Panc1 (cell line): ENCODE measurements at regions of chr17 and their contacts with region 1.

Region 1: GRCh38 chr17:58219001-58219788 is at the start of gene MKS1:
- DNase-seq: peak; percentile 48
- ATAC-seq: peak; percentile 100
- H3K4me3 ChIP-seq: peak within 1 kb of the TSS; percentile 82 to 92
- H3K27ac ChIP-seq: peak within 1 kb of the TSS; percentile 87
- H3K4me1 ChIP-seq: no peaks in the 10 kb centered on the region; the same call in 1 of the 2 replicates
- H3K27me3 ChIP-seq: no peaks in the 10 kb centered on the region
- CTCF ChIP-seq: peak; percentile 70
- total RNA-seq, gene MKS1: 12.1 TPM

Region 2: DNA sequence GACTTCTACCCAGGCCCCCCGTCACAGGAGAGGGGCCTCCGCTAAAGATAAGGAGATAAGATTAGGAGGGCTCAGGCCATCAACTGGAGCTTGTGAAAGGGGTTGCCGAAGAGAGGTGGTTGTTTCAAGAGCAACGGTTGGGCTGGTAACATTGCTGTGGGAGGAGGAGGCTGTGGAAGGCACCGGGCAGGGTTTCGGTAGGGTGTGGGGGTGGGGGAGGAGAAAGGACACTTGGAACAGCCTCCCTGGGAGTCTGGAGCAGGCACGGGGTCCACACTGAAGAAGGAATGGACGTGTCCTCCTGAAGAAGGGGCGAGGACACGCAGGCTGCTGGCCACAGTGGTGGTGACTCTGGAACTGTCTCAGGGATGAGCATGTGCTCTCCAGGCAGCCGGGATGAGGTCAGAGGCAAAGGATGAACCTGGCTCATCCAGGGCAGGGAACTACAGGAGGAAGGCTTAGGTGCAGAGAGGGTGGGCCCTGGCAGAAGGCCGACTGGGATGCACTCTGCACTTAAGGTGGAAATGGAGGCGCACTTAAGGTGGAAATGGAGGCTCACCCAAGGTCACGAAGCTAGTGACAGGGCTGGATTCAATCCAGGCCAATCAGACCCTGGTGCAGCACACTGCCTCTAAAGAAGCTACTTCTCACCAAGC is 27.8 kb before region 1 on chr17:
- CTCF ChIA-PET with region 1: interaction called, 15 read pairs
- POLR2A ChIA-PET with region 1: no interaction called
- in situ Hi-C with region 1: no loop called
- intact Hi-C with region 1: no loop called
- DNase-seq: no peak
- ATAC-seq: no peak
- H3K4me3 ChIP-seq: no peak overlapping the region
- H3K27ac ChIP-seq: no peak overlapping the region
- H3K4me1 ChIP-seq: peaks cover 5% of the 10 kb centered on the region; the same call in 1 of the 2 replicates
- H3K27me3 ChIP-seq: no peaks in the 10 kb centered on the region; the same call in 1 of the 2 replicates
- CTCF ChIP-seq: no peak